GM12878 (cell line): ENCODE measurements at regions of chr13 and their contacts with region 1.

Region 1: DNA sequence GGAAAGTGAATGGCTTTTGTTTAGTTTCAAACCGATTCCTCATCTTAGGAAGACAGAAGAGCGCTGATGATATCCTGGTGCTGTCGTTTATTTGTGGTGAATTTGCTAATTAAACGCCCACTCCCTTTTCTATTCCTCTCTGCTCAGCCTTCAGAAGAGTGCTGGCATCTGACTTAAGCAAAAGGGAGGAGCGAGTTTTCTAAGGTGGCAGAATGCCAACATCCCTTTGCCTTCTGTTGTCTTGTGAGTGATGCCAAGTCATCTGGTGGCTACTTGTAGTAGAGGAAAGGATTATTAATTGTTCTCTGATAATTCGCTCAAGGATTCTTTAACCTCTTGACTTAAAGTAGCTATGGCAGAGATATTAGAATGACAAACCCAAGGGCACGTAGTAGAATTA is 68.1 kb downstream of the ERCC5 start:
- DNase-seq: no peak
- ATAC-seq: no peak
- H3K4me3 ChIP-seq: no peak overlapping the region
- H3K27ac ChIP-seq: no peak overlapping the region
- H3K4me1 ChIP-seq: no peaks in the 10 kb centered on the region
- H3K27me3 ChIP-seq: no peaks in the 10 kb centered on the region
- CTCF ChIP-seq: no peak
- EP300 ChIP-seq: no peak
- POLR2A ChIP-seq: no peak
- RAD21 ChIP-seq: no peak

Region 2: DNA sequence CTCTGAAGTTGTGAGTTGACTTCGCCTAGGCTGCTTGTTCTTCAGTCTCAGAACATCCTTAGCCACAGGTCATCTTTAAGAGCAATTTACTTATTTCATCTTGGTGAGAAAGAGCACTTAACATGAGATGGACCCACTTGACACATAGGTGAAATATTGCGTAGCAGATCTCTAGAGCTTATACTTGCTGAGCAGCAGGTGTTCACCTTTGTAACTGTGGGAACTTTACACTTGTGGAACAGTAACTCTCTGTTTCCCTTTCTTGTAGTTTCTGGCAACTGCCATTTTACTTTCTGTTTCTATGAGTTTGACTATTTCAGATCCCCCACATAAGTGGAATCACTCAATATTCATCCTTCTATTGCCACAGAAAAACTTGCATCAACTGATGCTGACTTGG is 56.6 kb after region 1 on chr13:
- CTCF ChIA-PET with region 1: interaction called, 4 read pairs
- POLR2A ChIA-PET with region 1: no interaction called
- RAD21 ChIA-PET with region 1: interaction called, 5 read pairs
- SMC1A ChIA-PET with region 1: interaction called, 4 read pairs
- in situ Hi-C with region 1: no loop called
- intact Hi-C with region 1: loop called (anchors 2 kb)
- DNase-seq: peak; percentile 92
- ATAC-seq: peak; percentile 94
- H3K4me3 ChIP-seq: no peak overlapping the region
- H3K27ac ChIP-seq: peak overlapping the region; percentile 69
- H3K4me1 ChIP-seq: peaks cover 26% of the 10 kb centered on the region
- H3K27me3 ChIP-seq: no peaks in the 10 kb centered on the region
- CTCF ChIP-seq: no peak
- EP300 ChIP-seq: peak; percentile 51 to 83; a peak in 2 of 4 replicates
- POLR2A ChIP-seq: no peak
- RAD21 ChIP-seq: peak; percentile 19; the same call in 1 of the 2 replicates

Region 3: GRCh38 chr13:103031332-103031873 is 117.5 kb after region 1 on chr13:
- CTCF ChIA-PET with region 1: no interaction called
- POLR2A ChIA-PET with region 1: no interaction called
- RAD21 ChIA-PET with region 1: no interaction called
- SMC1A ChIA-PET with region 1: interaction called, 4 read pairs
- in situ Hi-C with region 1: no loop called
- intact Hi-C with region 1: loop called (anchors 1 kb)
- DNase-seq: peak; percentile 90
- ATAC-seq: peak; percentile 93
- H3K4me3 ChIP-seq: no peak overlapping the region
- H3K27ac ChIP-seq: peak overlapping the region; percentile 79
- H3K4me1 ChIP-seq: peaks cover 38% of the 10 kb centered on the region
- H3K27me3 ChIP-seq: no peaks in the 10 kb centered on the region
- CTCF ChIP-seq: no peak
- EP300 ChIP-seq: peak; percentile 95 to 99
- POLR2A ChIP-seq: no peak
- RAD21 ChIP-seq: peak; percentile 19

Region 4: DNA sequence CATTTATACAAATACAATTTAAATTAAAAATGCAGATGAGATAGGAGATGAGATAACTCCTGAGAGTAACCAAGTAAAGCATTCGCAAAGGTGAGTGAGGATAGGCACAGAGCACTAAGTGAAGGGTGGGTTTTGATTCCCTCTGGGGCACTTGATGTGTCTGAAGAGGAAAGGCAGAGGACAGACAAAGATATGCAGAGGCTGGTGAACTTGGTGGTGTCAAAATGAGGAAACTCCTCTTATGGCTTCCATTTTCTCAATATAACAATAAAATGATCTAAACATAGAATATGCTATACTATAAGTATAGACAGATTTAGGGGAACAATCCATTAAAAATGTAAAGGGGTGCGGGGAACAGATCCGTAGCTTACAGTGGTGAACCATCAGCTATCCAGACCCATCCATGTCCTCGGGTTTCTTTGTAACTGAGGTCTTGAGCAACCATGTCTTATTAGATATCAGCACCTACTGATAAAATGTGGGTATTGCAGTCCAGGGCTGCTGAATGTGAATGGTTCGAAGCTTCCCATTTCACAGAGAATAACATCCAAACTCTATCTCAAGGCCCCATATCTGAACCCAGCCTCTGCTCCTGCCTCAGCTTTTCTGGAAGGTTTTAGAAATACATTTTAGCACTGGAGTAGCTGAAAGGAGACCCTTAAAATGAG is 226.2 kb after region 1 on chr13:
- CTCF ChIA-PET with region 1: interaction called, 35 read pairs
- POLR2A ChIA-PET with region 1: no interaction called
- RAD21 ChIA-PET with region 1: interaction called, 51 read pairs
- SMC1A ChIA-PET with region 1: interaction called, 39 read pairs
- in situ Hi-C with region 1: loop called (anchors 5 kb)
- intact Hi-C with region 1: loop called (anchors 1 kb)
- DNase-seq: peak; percentile 52
- ATAC-seq: peak; percentile 93
- H3K4me3 ChIP-seq: no peak overlapping the region
- H3K27ac ChIP-seq: no peak overlapping the region
- H3K4me1 ChIP-seq: no peaks in the 10 kb centered on the region
- H3K27me3 ChIP-seq: no peaks in the 10 kb centered on the region
- CTCF ChIP-seq: peak; percentile 70 to 90 (median 74)
- EP300 ChIP-seq: no peak
- POLR2A ChIP-seq: no peak
- RAD21 ChIP-seq: peak; percentile 98

Region 5: DNA sequence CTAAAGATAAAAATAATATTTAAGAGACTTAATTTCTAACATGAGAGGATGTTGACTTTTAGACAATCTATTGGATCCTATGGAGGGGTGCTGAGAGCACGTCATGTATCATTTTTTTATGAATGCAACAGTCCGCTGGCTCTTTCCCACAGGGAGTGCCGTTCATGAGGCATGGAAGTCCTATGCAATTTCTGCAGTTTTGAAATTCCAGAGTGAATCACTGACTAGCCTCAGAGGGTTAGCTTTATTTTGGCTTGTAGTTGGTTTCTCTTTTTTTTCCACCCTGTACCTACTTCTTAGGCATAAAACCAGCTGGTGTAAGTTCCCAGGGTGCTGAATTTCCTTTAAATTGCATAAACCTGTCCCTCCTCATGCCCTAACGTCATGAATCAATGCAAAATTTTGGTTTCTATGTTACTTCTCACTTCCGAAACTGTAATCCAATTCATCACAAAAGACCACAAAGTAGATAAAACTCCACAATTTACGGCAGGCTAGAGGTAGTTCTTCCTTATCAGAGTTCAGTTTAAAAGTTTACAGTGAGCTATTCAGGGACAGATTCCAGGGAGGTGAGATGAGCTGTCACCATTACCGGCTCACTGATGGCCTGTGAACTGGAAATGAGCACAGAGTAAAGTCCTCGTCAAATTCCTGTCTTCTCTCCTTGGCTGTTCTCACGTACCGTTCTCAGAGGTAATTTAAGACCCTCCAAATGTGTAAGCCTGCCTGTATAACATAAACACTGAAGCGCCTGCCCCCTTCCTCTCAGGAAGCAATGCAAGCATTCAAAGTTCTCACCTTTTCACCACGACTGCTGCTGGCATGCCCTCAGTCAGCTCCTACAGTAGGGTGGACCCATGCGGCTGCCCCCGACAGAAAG is 368.9 kb after region 1 on chr13:
- CTCF ChIA-PET with region 1: no interaction called
- POLR2A ChIA-PET with region 1: no interaction called
- RAD21 ChIA-PET with region 1: no interaction called
- SMC1A ChIA-PET with region 1: no interaction called
- in situ Hi-C with region 1: no loop called
- intact Hi-C with region 1: loop called (anchors 10 kb)
- DNase-seq: no peak
- ATAC-seq: peak; percentile 62
- H3K4me3 ChIP-seq: no peak overlapping the region
- H3K27ac ChIP-seq: no peak overlapping the region
- H3K4me1 ChIP-seq: peaks cover 5% of the 10 kb centered on the region
- H3K27me3 ChIP-seq: no peaks in the 10 kb centered on the region
- CTCF ChIP-seq: no peak
- EP300 ChIP-seq: 0 out of 4 replicates have a peak, but pooled peaks of 1 of the 2 experiments have one; percentile 11
- POLR2A ChIP-seq: no peak
- RAD21 ChIP-seq: no peak

Region 6: DNA sequence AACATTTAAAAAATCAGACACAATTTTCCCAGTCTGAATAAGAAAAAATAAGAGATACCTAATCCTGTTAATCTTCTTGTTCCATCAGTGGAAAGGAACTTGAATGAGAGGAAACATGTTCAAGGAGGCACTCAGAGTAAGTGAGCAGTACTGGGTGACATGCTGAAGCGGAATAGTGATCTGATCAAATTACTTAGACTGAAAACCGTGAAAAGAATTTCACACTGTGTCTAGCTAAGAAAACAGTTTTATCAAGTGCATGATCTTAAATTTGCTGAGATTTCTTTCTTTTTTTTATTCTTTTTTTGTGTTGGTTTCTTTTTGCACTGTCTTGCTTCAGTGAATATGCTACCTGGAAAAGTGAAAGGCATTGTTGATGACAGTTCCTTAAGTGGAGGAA is 401.8 kb after region 1 on chr13:
- CTCF ChIA-PET with region 1: no interaction called
- POLR2A ChIA-PET with region 1: no interaction called
- RAD21 ChIA-PET with region 1: no interaction called
- SMC1A ChIA-PET with region 1: no interaction called
- in situ Hi-C with region 1: no loop called
- intact Hi-C with region 1: no loop called
- DNase-seq: no peak
- ATAC-seq: no peak
- H3K4me3 ChIP-seq: no peak overlapping the region
- H3K27ac ChIP-seq: no peak overlapping the region
- H3K4me1 ChIP-seq: no peaks in the 10 kb centered on the region
- H3K27me3 ChIP-seq: no peaks in the 10 kb centered on the region
- CTCF ChIP-seq: no peak
- EP300 ChIP-seq: no peak
- POLR2A ChIP-seq: no peak
- RAD21 ChIP-seq: no peak

Region 7: DNA sequence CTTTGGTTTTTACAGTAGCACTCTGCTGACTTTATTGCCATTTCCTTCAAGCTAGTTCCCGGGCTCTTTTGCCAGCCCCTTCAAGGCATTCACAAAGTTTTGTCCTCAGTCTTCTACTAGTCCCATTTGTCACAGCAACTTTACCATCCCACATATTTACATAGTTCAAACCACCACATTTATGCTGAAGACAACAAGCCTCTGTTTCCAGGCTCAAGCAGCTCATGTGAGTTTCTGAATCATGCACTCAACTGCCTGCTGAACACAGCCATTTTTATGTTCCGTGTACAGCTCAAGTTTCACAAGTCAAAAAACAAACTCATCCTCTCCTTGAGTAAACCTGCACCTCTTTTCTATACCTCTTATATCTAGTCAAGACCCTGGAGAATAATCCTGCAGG is 1129.3 kb after region 1 on chr13:
- CTCF ChIA-PET with region 1: interaction called, 3 read pairs
- POLR2A ChIA-PET with region 1: no interaction called
- RAD21 ChIA-PET with region 1: no interaction called
- SMC1A ChIA-PET with region 1: no interaction called
- in situ Hi-C with region 1: no loop called
- intact Hi-C with region 1: loop called (anchors 10 kb)
- DNase-seq: no peak
- ATAC-seq: no peak
- H3K4me3 ChIP-seq: no peak overlapping the region
- H3K27ac ChIP-seq: no peak overlapping the region
- H3K4me1 ChIP-seq: no peaks in the 10 kb centered on the region
- H3K27me3 ChIP-seq: no peaks in the 10 kb centered on the region
- CTCF ChIP-seq: no peak
- EP300 ChIP-seq: no peak
- POLR2A ChIP-seq: no peak
- RAD21 ChIP-seq: no peak